ENCODE measurements at regions of chr16 and their contacts with region 1.

Region 1: DNA sequence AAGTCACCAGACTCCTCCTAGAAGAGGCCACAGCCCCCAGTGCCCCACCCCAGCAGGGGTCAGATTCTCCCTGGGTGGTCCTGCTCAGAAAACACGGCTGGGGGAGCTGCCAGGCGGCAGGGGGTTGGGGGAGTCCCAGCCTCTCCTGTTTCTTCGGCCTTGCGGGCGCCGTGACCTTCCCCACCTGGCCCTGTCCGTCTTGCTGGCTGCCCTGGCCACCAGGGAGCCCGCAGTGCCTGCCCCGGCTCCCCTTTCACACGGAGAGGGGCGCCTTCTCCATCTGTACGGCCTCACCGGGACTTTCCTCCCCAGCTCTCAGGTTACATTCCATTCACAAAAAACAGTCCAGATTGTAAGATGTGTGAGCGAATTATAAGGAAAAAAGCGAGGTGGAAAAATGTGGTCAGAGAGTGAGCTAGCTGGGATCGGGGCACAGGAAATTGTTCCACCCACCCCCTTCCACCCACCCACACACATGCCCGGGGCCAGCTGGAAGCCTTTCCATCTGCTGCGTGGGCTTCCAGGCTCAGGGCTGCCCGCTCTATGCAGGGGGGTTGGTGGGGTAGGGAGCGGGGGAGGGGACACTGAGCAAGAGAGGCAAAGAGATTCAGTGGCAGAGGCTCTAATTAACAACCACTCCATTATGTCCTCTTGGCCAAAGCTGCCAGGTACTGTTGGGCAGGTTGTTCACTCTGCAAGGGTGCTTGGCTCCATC is 14.6 kb upstream of the CIBAR2 start:
- DNase-seq: no peak
- H3K4me3 ChIP-seq: no peak overlapping the region
- CTCF ChIP-seq: no peak
- POLR2A ChIP-seq: no peak

Region 2: DNA sequence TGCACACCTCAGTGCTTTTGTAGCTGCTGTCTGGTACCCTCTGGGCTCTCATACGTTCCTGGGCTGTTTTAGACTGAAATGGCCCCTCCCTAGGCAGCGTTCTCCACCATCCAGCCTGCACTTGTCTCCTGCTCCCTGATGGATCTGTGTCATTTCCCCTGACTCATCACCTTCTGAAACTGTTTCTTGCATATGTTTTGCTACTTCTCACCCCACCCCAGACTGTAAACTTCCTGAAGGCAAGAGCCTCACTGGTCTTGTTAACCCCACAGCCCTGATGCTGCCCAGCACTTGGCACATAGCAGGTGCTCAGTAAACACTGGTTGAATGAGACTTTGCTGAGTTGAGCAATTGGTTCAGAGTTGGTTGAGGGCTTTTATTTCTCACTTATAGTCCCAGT is 228.4 kb before region 1 on chr16:
- intact Hi-C with region 1: no loop called
- DNase-seq: no peak
- H3K4me3 ChIP-seq: no peak overlapping the region
- CTCF ChIP-seq: no peak
- POLR2A ChIP-seq: no peak

Region 3: DNA sequence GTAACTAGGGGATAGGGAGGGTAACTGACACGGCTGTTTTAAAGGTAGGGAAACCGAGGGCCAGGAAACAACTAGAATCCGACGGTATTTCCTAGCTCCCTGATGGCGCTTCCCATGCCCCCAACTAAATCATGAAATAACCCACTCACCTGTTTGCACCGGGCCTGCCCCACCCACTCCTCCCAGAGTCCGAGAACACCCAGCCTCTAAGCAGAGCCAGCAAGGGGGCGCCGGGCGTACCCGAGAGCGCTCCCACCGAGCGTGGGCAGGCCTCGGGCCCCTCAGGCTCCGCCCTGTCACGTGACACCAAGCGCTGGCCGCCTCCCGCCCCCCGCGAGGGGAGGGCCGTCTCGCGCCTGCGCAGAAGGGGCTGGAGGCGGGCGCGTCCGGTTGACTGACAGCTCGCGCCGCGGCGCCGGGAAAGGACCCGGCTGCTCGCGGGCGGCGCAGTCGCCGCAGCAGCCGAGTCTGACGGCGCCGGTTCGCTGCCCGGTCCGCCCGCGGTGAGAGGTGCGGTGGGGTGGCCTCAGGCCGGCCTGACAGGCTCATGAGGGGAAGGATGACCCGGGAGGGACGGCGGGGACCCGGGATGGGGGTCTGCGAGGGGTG is 99.4 kb before region 1 on chr16 and contains the start of gene KIAA0513:
- intact Hi-C with region 1: no loop called
- DNase-seq: peak; percentile 88 to 98
- H3K4me3 ChIP-seq: peak within 1 kb of the TSS; percentile 61
- CTCF ChIP-seq: no peak
- POLR2A ChIP-seq: peak in 1 of 2 donors; percentile 87
- total RNA-seq, gene KIAA0513: 37.5 to 48.1 (median 39.2) TPM

Region 4: DNA sequence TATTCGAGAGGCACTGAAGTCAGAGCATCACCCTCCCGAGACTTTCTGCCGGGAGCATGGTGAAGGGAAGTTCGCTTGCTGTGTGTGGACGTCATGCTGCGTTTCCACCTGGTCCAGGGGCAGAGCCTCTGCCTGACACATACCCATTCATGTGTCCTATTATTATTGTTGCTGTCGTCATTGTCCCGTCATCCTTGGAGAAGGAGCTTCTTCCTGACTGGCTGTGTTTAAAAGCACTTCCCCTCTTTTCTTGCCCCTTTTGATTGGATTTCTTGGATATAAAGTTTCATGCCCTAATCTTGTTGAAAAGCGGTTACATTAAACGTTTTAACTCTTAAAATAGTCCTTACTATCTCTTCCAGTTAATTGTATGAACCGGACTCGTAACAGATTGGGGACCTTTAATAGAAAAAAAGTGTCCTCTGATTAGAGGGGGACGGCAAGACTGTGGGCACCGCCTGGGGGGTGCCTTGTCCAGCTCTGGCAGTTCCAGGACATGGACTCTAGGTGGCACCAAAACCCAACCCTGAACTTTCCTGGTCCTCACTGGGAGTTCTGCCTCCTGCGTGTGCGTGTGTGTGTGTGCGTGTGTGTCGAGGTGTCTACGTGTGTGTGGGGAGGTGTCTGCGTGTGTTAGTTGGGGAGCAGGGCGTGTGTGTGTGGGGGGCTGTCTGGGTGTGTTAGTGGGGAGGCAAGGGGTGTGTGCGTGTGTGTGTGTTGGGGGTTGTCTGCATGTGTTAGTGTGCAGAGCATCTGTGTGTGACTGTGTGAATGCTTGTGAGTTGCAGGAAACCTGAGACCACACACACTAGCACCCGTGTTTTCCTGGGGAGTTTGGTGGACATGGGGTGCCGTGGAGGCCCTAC is 118.7 kb after region 1 on chr16:
- intact Hi-C with region 1: loop called (anchors 10 kb)
- DNase-seq: no peak
- H3K4me3 ChIP-seq: no peak overlapping the region
- CTCF ChIP-seq: peak in 1 of 3 donors; percentile 75
- POLR2A ChIP-seq: no peak